ENCODE measurements at regions of chr7 and their contacts with region 1.

Region 1: DNA sequence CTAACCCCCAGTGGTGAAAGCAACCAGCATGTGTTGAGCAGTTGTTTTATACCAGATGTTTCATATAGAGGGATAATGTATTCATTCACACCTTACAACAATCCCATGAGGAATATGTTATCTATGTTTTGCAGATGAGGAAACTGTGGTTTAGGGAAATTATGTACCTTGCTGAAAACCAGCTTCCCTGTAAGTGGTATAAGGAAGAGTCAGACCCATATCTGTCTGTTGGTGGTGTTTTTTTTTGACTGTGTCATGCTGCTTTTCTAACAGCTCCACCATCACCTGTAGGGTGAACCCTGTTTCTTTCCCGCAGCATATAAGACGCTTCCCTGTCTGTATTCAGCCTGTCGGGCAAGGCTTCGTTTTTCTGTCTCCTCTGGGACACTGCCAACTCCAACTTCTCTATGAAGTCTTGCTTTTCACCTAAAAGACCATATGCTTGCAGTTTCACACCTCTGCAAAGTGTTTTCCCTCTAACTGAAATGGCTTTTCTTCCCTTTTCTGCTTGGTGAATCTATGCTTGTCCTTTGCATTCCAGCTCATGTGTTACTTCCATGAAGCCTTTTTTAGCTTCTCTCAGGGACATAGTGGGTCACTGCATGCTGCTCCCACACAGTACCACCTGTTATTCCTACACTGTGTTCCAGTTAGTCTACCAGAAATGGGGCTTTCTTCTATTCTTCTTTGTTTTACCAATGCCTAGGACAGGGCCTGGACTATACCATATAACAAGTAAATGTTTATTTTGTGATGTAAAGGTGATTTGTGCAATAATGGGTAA is 92.8 kb downstream of the ST7 start:
- DNase-seq: no peak
- ATAC-seq: no peak
- H3K4me3 ChIP-seq: no peak overlapping the region
- H3K4me3 Mint-ChIP-seq: no peak overlapping the region
- H3K27ac ChIP-seq: no peak overlapping the region
- H3K27ac Mint-ChIP-seq: no peak overlapping the region
- H3K4me1 ChIP-seq: peaks cover 16% of the 10 kb centered on the region
- H3K4me1 Mint-ChIP-seq: peaks cover 26% of the 10 kb centered on the region
- H3K27me3 ChIP-seq: no peaks in the 10 kb centered on the region
- H3K27me3 Mint-ChIP-seq: no peaks in the 10 kb centered on the region
- CTCF ChIP-seq: no peak

Region 2: GRCh38 chr7:116348331-116348730 is 697.8 kb before region 1 on chr7:
- CTCF ChIA-PET with region 1: no interaction called
- POLR2A ChIA-PET with region 1: no interaction called
- intact Hi-C with region 1: no loop called
- DNase-seq: no peak
- ATAC-seq: no peak
- H3K4me3 ChIP-seq: no peak overlapping the region
- H3K4me3 Mint-ChIP-seq: no peak overlapping the region
- H3K27ac ChIP-seq: no peak overlapping the region
- H3K27ac Mint-ChIP-seq: no peak overlapping the region
- H3K4me1 ChIP-seq: no peaks in the 10 kb centered on the region
- H3K4me1 Mint-ChIP-seq: no peaks in the 10 kb centered on the region
- H3K27me3 ChIP-seq: no peaks in the 10 kb centered on the region
- H3K27me3 Mint-ChIP-seq: peaks cover 7% of the 10 kb centered on the region
- CTCF ChIP-seq: no peak

Region 3: DNA sequence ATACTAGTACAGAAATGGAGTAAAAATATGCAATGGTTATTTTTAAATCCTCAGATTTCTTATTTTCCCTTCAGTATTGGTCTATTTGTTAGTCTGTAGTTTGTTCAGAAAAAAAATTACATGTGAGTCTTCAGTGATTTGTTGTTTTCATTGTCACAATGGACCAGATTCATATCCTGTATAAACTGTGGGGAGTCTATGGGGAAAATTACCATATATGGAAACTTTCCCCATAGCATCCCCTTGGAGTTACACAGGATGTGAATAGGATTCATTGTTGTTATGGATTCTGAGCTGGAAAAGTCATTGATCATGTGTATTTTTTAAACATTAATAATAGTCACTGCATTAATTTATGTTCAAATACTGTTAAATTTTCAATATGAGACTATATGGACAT is 20.2 kb before region 1 on chr7:
- CTCF ChIA-PET with region 1: no interaction called
- POLR2A ChIA-PET with region 1: no interaction called
- intact Hi-C with region 1: loop called in 1 of 2 experiments (anchors 1 kb)
- DNase-seq: no peak
- ATAC-seq: no peak
- H3K4me3 ChIP-seq: no peak overlapping the region
- H3K4me3 Mint-ChIP-seq: no peak overlapping the region
- H3K27ac ChIP-seq: no peak overlapping the region
- H3K27ac Mint-ChIP-seq: no peak overlapping the region
- H3K4me1 ChIP-seq: no peaks in the 10 kb centered on the region
- H3K4me1 Mint-ChIP-seq: peaks cover 15% of the 10 kb centered on the region
- H3K27me3 ChIP-seq: no peaks in the 10 kb centered on the region
- H3K27me3 Mint-ChIP-seq: no peaks in the 10 kb centered on the region
- CTCF ChIP-seq: no peak

Region 4: GRCh38 chr7:117061751-117062150 is 15.6 kb after region 1 on chr7:
- CTCF ChIA-PET with region 1: no interaction called
- POLR2A ChIA-PET with region 1: no interaction called
- intact Hi-C with region 1: no loop called
- DNase-seq: no peak
- ATAC-seq: no peak
- H3K4me3 ChIP-seq: no peak overlapping the region
- H3K4me3 Mint-ChIP-seq: no peak overlapping the region
- H3K27ac ChIP-seq: no peak overlapping the region
- H3K27ac Mint-ChIP-seq: no peak overlapping the region
- H3K4me1 ChIP-seq: no peaks in the 10 kb centered on the region
- H3K4me1 Mint-ChIP-seq: no peaks in the 10 kb centered on the region
- H3K27me3 ChIP-seq: no peaks in the 10 kb centered on the region
- H3K27me3 Mint-ChIP-seq: no peaks in the 10 kb centered on the region
- CTCF ChIP-seq: no peak

Region 5: DNA sequence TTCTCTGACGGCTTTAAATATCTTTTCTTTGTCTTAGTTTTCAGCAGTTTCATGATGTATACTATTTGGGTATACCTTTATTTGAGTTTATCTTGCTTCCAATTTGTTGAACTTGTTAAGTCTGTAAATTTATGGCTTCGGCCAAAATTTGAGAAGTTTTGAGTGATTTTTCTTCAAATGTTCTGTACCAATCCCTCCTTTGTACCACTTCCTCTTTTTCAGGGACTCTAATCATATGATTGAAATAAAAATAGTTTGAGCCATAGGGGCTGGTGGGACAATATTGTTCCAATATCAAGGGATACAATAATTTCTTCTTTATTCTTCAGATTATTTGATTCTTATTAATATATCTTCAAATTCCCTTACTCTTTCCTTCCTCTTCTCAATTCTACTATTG is 870.2 kb after region 1 on chr7:
- CTCF ChIA-PET with region 1: no interaction called
- POLR2A ChIA-PET with region 1: no interaction called
- intact Hi-C with region 1: no loop called
- DNase-seq: no peak
- ATAC-seq: no peak
- H3K4me3 ChIP-seq: no peak overlapping the region
- H3K4me3 Mint-ChIP-seq: no peak overlapping the region
- H3K27ac ChIP-seq: no peak overlapping the region
- H3K27ac Mint-ChIP-seq: no peak overlapping the region
- H3K4me1 ChIP-seq: no peaks in the 10 kb centered on the region
- H3K4me1 Mint-ChIP-seq: no peaks in the 10 kb centered on the region
- H3K27me3 ChIP-seq: no peaks in the 10 kb centered on the region
- H3K27me3 Mint-ChIP-seq: no peaks in the 10 kb centered on the region
- CTCF ChIP-seq: no peak